PC-9 (cell line): ENCODE measurements at regions of chr12 and their contacts with region 1.

Region 1: GRCh38 chr12:13100882-13101769 is 2.3 kb downstream of the GSG1 start:
- DNase-seq: peak; percentile 87 to 99
- H3K4me3 ChIP-seq: peak overlapping the region; percentile 70
- H3K27ac ChIP-seq: peak overlapping the region; percentile 97
- H3K4me1 ChIP-seq: peaks cover 70% of the 10 kb centered on the region
- H3K27me3 ChIP-seq: no peaks in the 10 kb centered on the region
- CTCF ChIP-seq: no peak

Region 2: DNA sequence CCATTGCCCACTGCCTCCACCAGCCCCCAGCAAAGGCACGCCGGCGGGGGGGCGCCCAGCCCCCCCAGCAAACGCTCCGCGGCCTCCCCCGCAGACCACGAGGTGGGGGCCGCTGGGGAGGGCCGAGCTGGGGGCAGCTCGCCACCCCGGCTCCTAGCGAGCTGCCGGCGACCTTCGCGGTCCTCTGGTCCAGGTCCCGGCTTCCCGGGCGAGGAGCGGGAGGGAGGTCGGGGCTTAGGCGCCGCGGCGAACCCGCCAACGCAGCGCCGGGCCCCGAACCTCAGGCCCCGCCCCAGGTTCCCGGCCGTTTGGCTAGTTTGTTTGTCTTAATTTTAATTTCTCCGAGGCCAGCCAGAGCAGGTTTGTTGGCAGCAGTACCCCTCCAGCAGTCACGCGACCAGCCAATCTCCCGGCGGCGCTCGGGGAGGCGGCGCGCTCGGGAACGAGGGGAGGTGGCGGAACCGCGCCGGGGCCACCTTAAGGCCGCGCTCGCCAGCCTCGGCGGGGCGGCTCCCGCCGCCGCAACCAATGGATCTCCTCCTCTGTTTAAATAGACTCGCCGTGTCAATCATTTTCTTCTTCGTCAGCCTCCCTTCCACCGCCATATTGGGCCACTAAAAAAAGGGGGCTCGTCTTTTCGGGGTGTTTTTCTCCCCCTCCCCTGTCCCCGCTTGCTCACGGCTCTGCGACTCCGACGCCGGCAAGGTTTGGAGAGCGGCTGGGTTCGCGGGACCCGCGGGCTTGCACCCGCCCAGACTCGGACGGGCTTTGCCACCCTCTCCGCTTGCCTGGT is 384.1 kb before region 1 on chr12 and contains the start of gene CDKN1B:
- CTCF ChIA-PET with region 1: no interaction called
- POLR2A ChIA-PET with region 1: no interaction called
- intact Hi-C with region 1: loop called (anchors 5 kb)
- DNase-seq: peak; percentile 82 to 98
- H3K4me3 ChIP-seq: peak within 1 kb of the TSS; percentile 96
- H3K27ac ChIP-seq: peak within 1 kb of the TSS; percentile 98
- H3K4me1 ChIP-seq: peaks cover 38% of the 10 kb centered on the region
- H3K27me3 ChIP-seq: no peaks in the 10 kb centered on the region
- CTCF ChIP-seq: no peak
- total RNA-seq, gene CDKN1B: 54.9 and 67.5 TPM in 2 replicates

Region 3: GRCh38 chr12:13119826-13120225 is 18.7 kb after region 1 on chr12:
- CTCF ChIA-PET with region 1: interaction called, 8 read pairs
- POLR2A ChIA-PET with region 1: interaction called, 4 read pairs
- intact Hi-C with region 1: loop called (anchors 1 kb)
- DNase-seq: no peak
- H3K4me3 ChIP-seq: no peak overlapping the region
- H3K27ac ChIP-seq: no peak overlapping the region
- H3K4me1 ChIP-seq: peaks cover 29% of the 10 kb centered on the region
- H3K27me3 ChIP-seq: no peaks in the 10 kb centered on the region
- CTCF ChIP-seq: no peak

Region 4: DNA sequence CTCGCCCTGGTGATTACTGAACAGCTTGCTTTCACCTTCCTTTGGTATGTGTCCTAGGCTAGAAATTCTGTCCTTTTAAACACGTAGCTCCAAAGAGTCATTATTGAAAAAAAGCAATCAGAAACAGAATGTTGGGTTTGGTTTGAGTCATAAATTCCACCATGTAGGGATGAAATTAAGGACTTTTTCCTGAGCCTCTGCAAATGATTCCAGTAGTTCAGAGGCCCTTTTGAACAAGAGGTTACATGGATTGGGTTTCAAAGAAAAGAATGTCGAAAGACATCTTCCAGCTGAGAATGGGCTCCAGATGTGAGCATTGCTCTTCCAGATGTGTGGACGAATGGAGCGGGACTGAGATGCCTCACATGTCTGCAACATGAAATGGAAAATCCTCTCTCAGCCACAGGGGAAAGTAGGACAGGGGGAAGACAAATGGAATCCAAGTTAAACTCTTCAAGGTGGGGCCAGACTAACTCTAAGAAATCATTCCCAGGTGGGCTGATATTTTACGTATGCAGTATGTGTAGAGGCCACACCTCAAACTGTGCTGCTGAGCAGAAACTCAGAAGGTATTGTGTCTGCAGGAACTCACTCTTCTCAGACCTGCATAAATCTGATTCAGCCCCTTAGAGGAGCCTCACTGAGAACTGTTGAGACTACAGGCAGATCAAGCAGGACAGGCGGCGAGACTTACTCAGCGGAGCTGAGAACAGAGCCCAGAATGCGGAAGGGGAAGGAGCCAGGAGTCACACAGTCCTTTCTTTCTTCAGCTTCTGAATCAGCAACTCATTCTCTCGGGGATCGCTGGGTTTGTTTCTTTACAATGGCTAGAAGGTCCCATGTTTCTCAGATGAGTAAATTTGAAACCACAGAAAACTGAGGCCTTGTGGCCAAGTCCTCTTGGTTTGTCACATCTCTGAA is 72.1 kb after region 1 on chr12:
- CTCF ChIA-PET with region 1: interaction called, 7 read pairs
- POLR2A ChIA-PET with region 1: interaction called, 20 read pairs
- intact Hi-C with region 1: loop called (anchors 1 kb)
- DNase-seq: peak; percentile 93 to 97
- H3K4me3 ChIP-seq: peak overlapping the region; percentile 37; the same call in 1 of the 2 replicates
- H3K27ac ChIP-seq: peak overlapping the region; percentile 99
- H3K4me1 ChIP-seq: peaks cover 100% of the 10 kb centered on the region
- H3K27me3 ChIP-seq: no peaks in the 10 kb centered on the region
- CTCF ChIP-seq: no peak

Region 5: DNA sequence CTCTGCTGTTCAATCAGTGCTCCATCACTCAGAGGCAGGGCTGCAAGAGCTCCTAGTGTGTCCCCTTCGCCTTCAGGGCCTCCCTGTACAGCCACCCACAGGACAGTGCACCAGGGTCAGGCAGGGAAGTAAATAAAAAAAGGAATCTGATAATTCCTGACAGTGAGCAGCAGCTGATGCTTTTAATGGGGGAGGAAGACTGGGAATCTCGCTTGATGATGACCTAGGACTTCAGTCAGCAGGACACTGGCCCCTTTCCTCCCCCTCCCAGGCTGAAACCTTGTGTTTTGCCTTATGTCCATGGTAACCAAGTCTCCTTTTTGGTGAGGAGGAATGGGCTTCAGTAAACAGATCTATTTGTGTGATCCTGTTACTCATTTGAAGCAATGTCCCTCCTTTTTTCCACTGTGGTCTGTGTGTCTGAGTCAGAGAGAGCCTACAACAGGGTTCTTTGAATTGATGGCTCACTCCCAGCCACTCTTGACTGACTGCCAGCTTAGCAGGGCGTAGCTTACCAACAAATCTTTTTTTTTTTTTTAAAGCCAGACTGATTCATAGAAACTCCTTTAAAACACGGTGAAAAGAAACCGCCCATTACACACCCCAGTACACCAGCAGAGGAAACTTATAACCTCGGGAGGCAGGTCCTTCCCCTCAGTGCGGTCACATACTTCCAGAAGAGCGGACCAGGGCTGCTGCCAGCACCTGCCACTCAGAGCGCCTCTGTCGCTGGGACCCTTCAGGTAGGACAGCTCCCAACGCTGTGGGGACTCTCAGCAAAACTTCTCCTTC is 95.2 kb after region 1 on chr12 and contains the start of gene EMP1:
- CTCF ChIA-PET with region 1: interaction called, 6 read pairs
- POLR2A ChIA-PET with region 1: interaction called, 50 read pairs
- intact Hi-C with region 1: loop called (anchors 1 kb)
- DNase-seq: peak; percentile 96 to 100
- H3K4me3 ChIP-seq: peak within 1 kb of the TSS; percentile 97
- H3K27ac ChIP-seq: peak within 1 kb of the TSS; percentile 99
- H3K4me1 ChIP-seq: peaks cover 66% of the 10 kb centered on the region
- H3K27me3 ChIP-seq: no peaks in the 10 kb centered on the region
- CTCF ChIP-seq: no peak
- total RNA-seq, gene EMP1: 542 and 909 TPM in 2 replicates

Region 6: GRCh38 chr12:13211859-13212664 is 110.9 kb after region 1 on chr12:
- CTCF ChIA-PET with region 1: interaction called, 10 read pairs
- POLR2A ChIA-PET with region 1: interaction called, 13 read pairs
- intact Hi-C with region 1: no loop called
- DNase-seq: peak in 1 of 2 experiments; percentile 64
- H3K4me3 ChIP-seq: no peak overlapping the region
- H3K27ac ChIP-seq: peak overlapping the region; percentile 99
- H3K4me1 ChIP-seq: peaks cover 48% of the 10 kb centered on the region
- H3K27me3 ChIP-seq: no peaks in the 10 kb centered on the region
- CTCF ChIP-seq: peak; percentile 71

Region 7: GRCh38 chr12:13849456-13849855 is 748.3 kb after region 1 on chr12:
- CTCF ChIA-PET with region 1: no interaction called
- POLR2A ChIA-PET with region 1: no interaction called
- intact Hi-C with region 1: loop called (anchors 5 kb)
- DNase-seq: no peak
- H3K4me3 ChIP-seq: no peak overlapping the region
- H3K27ac ChIP-seq: no peak overlapping the region
- H3K4me1 ChIP-seq: no peaks in the 10 kb centered on the region
- H3K27me3 ChIP-seq: peaks cover 24% of the 10 kb centered on the region
- CTCF ChIP-seq: no peak

Region 8: GRCh38 chr12:14322403-14322802 is 1221.3 kb after region 1 on chr12:
- CTCF ChIA-PET with region 1: no interaction called
- POLR2A ChIA-PET with region 1: no interaction called
- intact Hi-C with region 1: no loop called
- DNase-seq: no peak
- H3K4me3 ChIP-seq: no peak overlapping the region
- H3K27ac ChIP-seq: no peak overlapping the region
- H3K4me1 ChIP-seq: 0 out of 2 replicates have a peak, but pooled peaks cover 5% of the 10 kb centered on the region
- H3K27me3 ChIP-seq: no peaks in the 10 kb centered on the region
- CTCF ChIP-seq: no peak